HepG2 (cell line): ENCODE measurements at regions of chr4 and their contacts with region 1.

Region 1: GRCh38 chr4:121726642-121727268 is 30.0 kb upstream of the ANXA5 start:
- DNase-seq: peak; percentile 64
- ATAC-seq: peak; percentile 92
- H3K4me3 ChIP-seq: no peak overlapping the region
- H3K27ac ChIP-seq: no peak overlapping the region
- H3K4me1 ChIP-seq: no peaks in the 10 kb centered on the region
- H3K27me3 ChIP-seq: peaks cover 0 to 4% of the 10 kb centered on the region in 2 experiments; a peak in 2 of 5 replicates
- CTCF ChIP-seq: peak; percentile 76
- EP300 ChIP-seq: no peak
- POLR2A ChIP-seq: no peak
- RAD21 ChIP-seq: 0 out of 2 replicates have a peak, but pooled peaks have one; percentile 34

Region 2: GRCh38 chr4:121462660-121463261 is 264.0 kb before region 1 on chr4:
- CTCF ChIA-PET with region 1: interaction called, 3 read pairs
- POLR2A ChIA-PET with region 1: no interaction called
- in situ Hi-C with region 1: no loop called
- intact Hi-C with region 1: loop called (anchors 2 kb)
- DNase-seq: peak; percentile 57
- ATAC-seq: peak; percentile 80
- H3K4me3 ChIP-seq: no peak overlapping the region
- H3K27ac ChIP-seq: no peak overlapping the region
- H3K4me1 ChIP-seq: no peaks in the 10 kb centered on the region
- H3K27me3 ChIP-seq: no peaks in the 10 kb centered on the region
- CTCF ChIP-seq: peak; percentile 71
- EP300 ChIP-seq: no peak
- POLR2A ChIP-seq: no peak
- RAD21 ChIP-seq: no peak

Region 3: DNA sequence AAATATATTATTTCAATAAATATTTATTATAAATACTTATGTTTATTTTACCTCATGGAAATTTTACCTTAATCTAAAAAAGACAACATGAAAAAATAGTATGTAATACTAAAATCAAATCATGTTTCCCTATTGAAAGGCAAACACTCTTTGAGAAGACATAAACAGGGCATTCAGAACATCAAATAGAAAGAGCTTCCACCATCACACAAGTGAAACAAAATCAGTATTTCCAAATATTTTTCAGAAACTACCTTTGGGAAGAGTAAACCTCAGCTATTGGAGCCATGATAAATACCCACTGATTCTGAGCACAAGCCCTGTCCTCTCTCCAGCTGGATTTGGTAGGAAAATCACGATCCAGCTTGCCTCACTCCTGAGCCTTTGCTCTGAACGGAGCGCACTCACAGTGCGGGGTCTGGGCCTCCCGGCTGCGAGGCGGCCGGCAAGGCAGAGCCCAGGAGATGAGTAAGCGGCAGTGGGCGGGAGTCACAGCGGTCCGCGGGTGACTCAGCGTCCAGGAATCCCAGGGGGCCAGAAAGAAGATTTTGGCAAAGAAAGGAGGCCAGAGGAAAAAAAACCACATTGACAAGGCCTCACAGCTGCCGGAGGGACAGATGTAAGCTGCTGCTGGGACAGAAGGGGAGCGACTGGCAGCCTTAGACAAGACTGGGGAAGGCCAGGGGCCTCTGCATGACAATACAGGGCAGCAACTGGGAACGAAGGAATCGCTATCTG is 15.3 kb before region 1 on chr4:
- CTCF ChIA-PET with region 1: no interaction called
- POLR2A ChIA-PET with region 1: no interaction called
- in situ Hi-C with region 1: no loop called
- intact Hi-C with region 1: loop called (anchors 1 kb)
- DNase-seq: peak; percentile 70
- ATAC-seq: peak; percentile 100
- H3K4me3 ChIP-seq: peak overlapping the region; percentile 31 to 58 (median 47); a peak in 5 of 6 replicates
- H3K27ac ChIP-seq: no peak overlapping the region
- H3K4me1 ChIP-seq: peaks cover 7% of the 10 kb centered on the region; the same call in 1 of the 2 replicates
- H3K27me3 ChIP-seq: peaks cover 0 to 7% of the 10 kb centered on the region in 2 experiments; a peak in 2 of 5 replicates
- CTCF ChIP-seq: no peak
- EP300 ChIP-seq: 0 out of 4 replicates have a peak, but pooled peaks of 1 of the 2 experiments have one; percentile 24
- POLR2A ChIP-seq: no peak
- RAD21 ChIP-seq: no peak